ENCODE measurements at regions of chr12 and their contacts with region 1.

Region 1: GRCh38 chr12:64385468-64385867 is 5.1 kb downstream of the C12orf56 start:
- DNase-seq: peak; percentile 65
- H3K4me3 Mint-ChIP-seq: no peak overlapping the region
- H3K27ac Mint-ChIP-seq: peak overlapping the region; percentile 52
- H3K4me1 Mint-ChIP-seq: peaks cover 31% of the 10 kb centered on the region
- H3K27me3 Mint-ChIP-seq: no peaks in the 10 kb centered on the region

Region 2: GRCh38 chr12:63779498-63780481 is 605.7 kb before region 1 on chr12 and contains the start of gene RXYLT1:
- CTCF ChIA-PET with region 1: no interaction called
- POLR2A ChIA-PET with region 1: no interaction called
- intact Hi-C with region 1: loop called (anchors 5 kb)
- DNase-seq: peak; percentile 90
- H3K4me3 Mint-ChIP-seq: peak within 1 kb of the TSS; percentile 93
- H3K27ac Mint-ChIP-seq: peak within 1 kb of the TSS; percentile 88
- H3K4me1 Mint-ChIP-seq: peaks cover 10% of the 10 kb centered on the region
- H3K27me3 Mint-ChIP-seq: no peaks in the 10 kb centered on the region
- total RNA-seq, gene RXYLT1: 14.0 to 14.3 TPM

Region 3: GRCh38 chr12:64293654-64294364 is 91.7 kb before region 1 on chr12:
- CTCF ChIA-PET with region 1: no interaction called
- POLR2A ChIA-PET with region 1: no interaction called
- intact Hi-C with region 1: loop called (anchors 5 kb)
- DNase-seq: no peak
- H3K4me3 Mint-ChIP-seq: no peak overlapping the region
- H3K27ac Mint-ChIP-seq: no peak overlapping the region
- H3K4me1 Mint-ChIP-seq: peaks cover 5% of the 10 kb centered on the region
- H3K27me3 Mint-ChIP-seq: peaks cover 14% of the 10 kb centered on the region

Region 4: DNA sequence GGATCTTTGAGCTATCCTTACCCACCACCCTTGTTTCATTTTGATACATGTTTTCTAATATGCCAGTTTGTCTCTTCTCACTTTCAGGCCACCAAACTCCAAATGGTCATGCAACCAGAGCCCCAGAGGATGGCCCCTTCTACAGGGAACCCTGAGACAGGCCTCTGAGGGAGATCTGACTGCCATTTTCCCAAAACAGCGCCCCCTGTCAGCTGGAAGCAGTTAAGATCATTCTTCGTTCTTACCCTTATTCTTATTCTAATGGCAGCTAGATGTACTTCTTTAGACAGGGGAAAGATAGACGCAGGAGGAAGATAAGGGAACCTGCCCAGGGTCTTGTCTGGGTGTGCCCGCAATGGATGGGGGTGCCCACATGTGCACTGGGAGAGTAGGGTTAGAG is 33.3 kb before region 1 on chr12:
- CTCF ChIA-PET with region 1: no interaction called
- POLR2A ChIA-PET with region 1: no interaction called
- intact Hi-C with region 1: no loop called
- DNase-seq: no peak
- H3K4me3 Mint-ChIP-seq: no peak overlapping the region
- H3K27ac Mint-ChIP-seq: no peak overlapping the region
- H3K4me1 Mint-ChIP-seq: no peaks in the 10 kb centered on the region
- H3K27me3 Mint-ChIP-seq: no peaks in the 10 kb centered on the region